Activated T-helper 2 cell treated with anti-CD3 and anti-CD28 coated beads, Interferon-gamma antibody, Interleukin-2, Interleukin-4, amounts not matched to agents 10 μg/mL and 5 μg/mL and 100 μg/mL, durations not matched to agents 14 hours and 24 hours and 36 hours (primary cell): ENCODE measurements at regions of chr12 and their contacts with region 1.

Region 1: GRCh38 chr12:48157018-48157888 is at the start of gene ASB8:
- DNase-seq: peak; percentile 99
- H3K4me3 Mint-ChIP-seq: peak within 1 kb of the TSS; percentile 86
- H3K27ac Mint-ChIP-seq: peak within 1 kb of the TSS; percentile 88
- H3K4me1 Mint-ChIP-seq: peaks cover 18% of the 10 kb centered on the region
- H3K27me3 Mint-ChIP-seq: peaks cover 2% of the 10 kb centered on the region
- total RNA-seq, gene ASB8: 32.5 and 33.1 TPM in 2 replicates

Region 2: DNA sequence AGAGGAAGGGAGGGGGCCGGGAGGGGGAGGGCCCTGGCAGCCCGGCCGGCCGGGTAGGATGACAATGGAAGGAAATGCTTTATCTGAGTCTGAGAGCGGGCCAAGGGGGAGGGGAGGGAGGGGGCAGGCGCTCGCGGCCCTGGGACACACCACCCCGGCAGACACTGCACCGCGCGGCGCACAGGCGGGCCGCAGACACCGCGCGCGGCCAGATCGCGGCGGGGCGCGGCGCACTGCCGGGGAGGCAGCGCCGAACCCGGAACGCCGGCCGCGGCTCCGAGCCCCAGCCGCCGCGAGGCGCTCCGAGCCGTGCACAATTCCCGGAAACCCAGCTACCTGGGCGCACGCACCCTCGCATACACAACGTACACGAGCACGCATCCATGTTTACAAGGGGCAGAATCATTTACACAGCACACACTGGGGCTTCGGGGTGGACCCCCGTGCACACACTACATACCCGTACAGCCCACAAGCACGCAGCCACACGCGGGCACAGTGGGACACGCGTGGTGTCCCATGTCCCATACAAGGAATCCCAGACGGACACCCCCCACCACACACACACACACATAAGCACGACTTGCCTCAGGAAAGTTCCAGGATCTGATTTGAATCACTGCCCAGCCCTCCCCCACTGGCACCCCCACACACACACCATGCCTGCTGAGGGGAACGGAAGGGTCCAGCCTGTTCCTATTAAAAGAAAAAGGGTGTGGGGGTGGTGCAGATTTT is 337.2 kb before region 1 on chr12 and contains the start of gene HDAC7:
- intact Hi-C with region 1: loop called (anchors 5 kb)
- DNase-seq: peak; percentile 56
- H3K4me3 Mint-ChIP-seq: peak within 1 kb of the TSS; percentile 88
- H3K27ac Mint-ChIP-seq: peak within 1 kb of the TSS; percentile 100
- H3K4me1 Mint-ChIP-seq: peaks cover 59% of the 10 kb centered on the region
- H3K27me3 Mint-ChIP-seq: no peaks in the 10 kb centered on the region
- total RNA-seq, gene HDAC7: 251 and 253 TPM in 2 replicates

Region 3: GRCh38 chr12:48105862-48106680 is 51.2 kb before region 1 on chr12 and contains the start of gene SENP1:
- intact Hi-C with region 1: loop called (anchors 1 kb)
- DNase-seq: peak; percentile 86
- H3K4me3 Mint-ChIP-seq: peak within 1 kb of the TSS; percentile 99
- H3K27ac Mint-ChIP-seq: peak within 1 kb of the TSS; percentile 97
- H3K4me1 Mint-ChIP-seq: peaks cover 40% of the 10 kb centered on the region
- H3K27me3 Mint-ChIP-seq: peaks cover 5% of the 10 kb centered on the region
- total RNA-seq, gene SENP1: 45.9 and 49.0 TPM in 2 replicates

Region 4: GRCh38 chr12:48119078-48119833 is 38.0 kb before region 1 on chr12 and contains the start of gene PFKM:
- intact Hi-C with region 1: loop called (anchors 2 kb)
- DNase-seq: peak; percentile 69
- H3K4me3 Mint-ChIP-seq: peak within 1 kb of the TSS; percentile 96
- H3K27ac Mint-ChIP-seq: peak within 1 kb of the TSS; percentile 74
- H3K4me1 Mint-ChIP-seq: peaks cover 20% of the 10 kb centered on the region
- H3K27me3 Mint-ChIP-seq: peaks cover 18% of the 10 kb centered on the region
- total RNA-seq, gene PFKM: 55.2 and 67.3 TPM in 2 replicates

Region 5: DNA sequence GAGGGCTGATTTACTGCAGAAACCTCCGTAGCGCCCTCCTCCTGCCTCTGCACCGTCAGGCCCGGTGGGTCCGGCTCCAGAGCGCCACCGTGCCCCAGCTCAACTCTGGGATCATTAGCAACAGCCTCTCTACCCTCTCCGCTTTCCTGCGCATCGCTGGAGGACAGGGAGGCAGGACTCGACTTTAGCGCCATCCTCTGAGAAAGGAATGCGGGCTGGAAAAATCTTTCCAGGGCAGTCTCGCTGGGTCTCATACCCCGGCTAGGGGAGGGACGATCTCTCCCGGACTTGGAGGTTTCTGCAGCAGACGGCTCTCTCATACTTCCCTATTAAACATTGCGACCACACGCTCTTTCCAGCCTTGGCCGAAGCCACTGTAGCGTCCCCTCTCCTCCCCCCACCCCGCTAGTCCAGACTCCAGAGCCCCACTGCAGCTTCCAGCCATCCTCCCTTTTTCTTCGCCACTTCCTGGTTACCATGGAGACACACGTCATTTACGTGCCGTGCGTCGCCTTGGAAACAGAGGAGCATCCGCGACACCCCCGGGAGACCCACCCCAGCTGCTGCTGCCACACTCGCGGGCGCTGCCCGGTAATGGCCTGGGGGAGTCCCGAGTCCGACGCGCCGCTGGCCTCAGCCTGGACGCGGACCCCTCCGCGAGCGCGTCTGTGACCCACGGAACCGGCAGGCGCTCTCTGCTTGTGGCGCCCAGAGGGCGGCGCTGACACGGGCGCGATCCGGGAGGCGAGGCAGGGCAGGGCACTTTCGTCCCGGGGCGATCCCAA is 26.0 kb after region 1 on chr12 and contains the start of gene CCDC184:
- intact Hi-C with region 1: loop called (anchors 1 kb)
- DNase-seq: peak; percentile 72
- H3K4me3 Mint-ChIP-seq: peak within 1 kb of the TSS; percentile 84
- H3K27ac Mint-ChIP-seq: no peak within 1 kb of the TSS
- H3K4me1 Mint-ChIP-seq: peaks cover 18% of the 10 kb centered on the region
- H3K27me3 Mint-ChIP-seq: peaks cover 61% of the 10 kb centered on the region
- total RNA-seq, gene CCDC184: 0.34 and 0.64 TPM in 2 replicates

Region 6: GRCh38 chr12:48197971-48198671 is 40.9 kb after region 1 on chr12:
- intact Hi-C with region 1: loop called (anchors 1 kb)
- DNase-seq: peak; percentile 90
- H3K4me3 Mint-ChIP-seq: peak overlapping the region; percentile 81
- H3K27ac Mint-ChIP-seq: peak overlapping the region; percentile 96
- H3K4me1 Mint-ChIP-seq: peaks cover 20% of the 10 kb centered on the region
- H3K27me3 Mint-ChIP-seq: peaks cover 21% of the 10 kb centered on the region

Region 7: GRCh38 chr12:48247181-48247966 is 90.1 kb after region 1 on chr12:
- intact Hi-C with region 1: no loop called
- DNase-seq: no peak
- H3K4me3 Mint-ChIP-seq: no peak overlapping the region
- H3K27ac Mint-ChIP-seq: no peak overlapping the region
- H3K4me1 Mint-ChIP-seq: no peaks in the 10 kb centered on the region
- H3K27me3 Mint-ChIP-seq: peaks cover 13% of the 10 kb centered on the region